Posterior cingulate gyrus (tissue), 11 donors: ENCODE measurements at regions of chr4 and their contacts with region 1.

Region 1: DNA sequence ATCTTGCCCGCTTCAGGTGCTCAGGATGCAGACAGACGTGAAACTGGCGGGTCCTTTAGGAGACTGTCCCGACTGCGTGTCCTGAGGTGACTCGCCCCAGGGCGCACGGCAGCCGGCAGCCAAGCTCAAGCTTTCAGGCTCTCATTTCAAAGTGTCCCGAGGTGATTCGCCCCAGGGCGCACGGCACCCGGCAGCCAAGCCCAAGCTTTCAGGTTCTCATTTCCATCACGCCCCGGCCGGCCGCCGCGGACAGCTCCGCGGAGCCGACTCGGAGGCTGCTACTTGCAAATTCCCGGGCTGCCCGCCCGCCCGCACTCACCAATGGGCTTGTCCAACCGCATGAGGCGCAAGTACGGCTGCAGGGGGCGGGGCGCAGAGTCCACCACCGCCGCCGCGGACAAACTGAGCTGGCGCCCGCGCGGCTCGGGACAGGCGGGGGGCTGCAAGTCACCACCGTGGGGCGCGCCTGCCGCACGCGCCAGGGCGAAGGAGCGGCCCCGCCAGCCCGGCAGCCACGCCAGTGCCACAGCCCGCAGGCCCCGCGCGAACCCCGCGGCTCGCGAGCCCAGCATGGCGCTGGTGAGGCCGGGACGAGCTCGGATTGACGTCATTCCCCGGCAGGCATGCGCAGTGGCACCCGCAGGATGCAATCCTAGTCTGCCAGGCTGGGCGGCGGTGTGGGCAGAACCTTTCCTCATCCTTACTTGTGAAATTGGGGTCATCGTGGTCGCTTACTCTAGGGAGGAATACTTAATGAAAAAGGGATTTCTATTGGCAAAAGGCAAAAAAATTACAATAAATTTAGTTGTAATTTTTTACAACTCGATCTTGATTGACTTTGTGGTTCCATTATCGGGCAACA is at the start of gene COQ2:
- DNase-seq: peak; percentile 93 to 99 (median 96)

Region 2: GRCh38 chr4:82379964-82380733 is 904.3 kb before region 1 on chr4:
- intact Hi-C with region 1: loop called (anchors 5 kb)
- DNase-seq: peak in 5 of 10 donors; percentile 24 to 90 (median 67)

Region 3: GRCh38 chr4:83455281-83456129 is 171.1 kb after region 1 on chr4 and contains the starts of genes HELQ and MRPS18C:
- intact Hi-C with region 1: loop called (anchors 10 kb)
- DNase-seq: peak; percentile 90 to 99 (median 95)